Vagina (tissue), 2 donors: ENCODE measurements at regions of chr9 and their contacts with region 1.

Region 1: GRCh38 chr9:74804018-74804385 is 83.7 kb downstream of the TRPM6 start:
- DNase-seq: no peak
- H3K4me3 ChIP-seq: no peak overlapping the region
- H3K27ac ChIP-seq: no peak overlapping the region
- H3K4me1 ChIP-seq: no peaks in the 10 kb centered on the region
- H3K27me3 ChIP-seq: no peaks in the 10 kb centered on the region
- CTCF ChIP-seq: no peak
- POLR2A ChIP-seq: no peak

Region 2: GRCh38 chr9:74770508-74771261 is 33.3 kb before region 1 on chr9:
- intact Hi-C with region 1: no loop called
- DNase-seq: no peak
- H3K4me3 ChIP-seq: no peak overlapping the region
- H3K27ac ChIP-seq: no peak overlapping the region
- H3K4me1 ChIP-seq: no peaks in the 10 kb centered on the region
- H3K27me3 ChIP-seq: no peaks in the 10 kb centered on the region
- CTCF ChIP-seq: no peak
- POLR2A ChIP-seq: no peak

Region 3: DNA sequence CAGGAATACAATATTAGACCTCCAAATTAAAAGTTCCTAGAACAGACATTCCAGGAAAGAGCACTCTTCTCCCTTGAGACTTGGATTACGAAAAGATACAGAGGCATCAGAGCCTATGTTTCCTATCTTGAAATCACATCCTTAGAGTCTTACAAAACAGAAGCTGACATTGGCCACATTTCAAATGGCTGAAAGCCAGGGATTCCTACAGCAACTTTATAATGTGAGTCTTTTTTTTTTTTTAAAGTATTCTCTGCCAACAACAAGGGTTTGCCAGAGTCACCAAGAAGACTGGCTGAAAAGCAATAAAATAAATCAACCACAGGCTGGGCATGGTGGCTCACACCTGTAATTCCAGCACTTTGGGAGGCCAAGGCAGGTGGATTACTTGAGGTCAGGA is 20.7 kb after region 1 on chr9:
- intact Hi-C with region 1: loop called (anchors 1 kb)
- DNase-seq: no peak
- H3K4me3 ChIP-seq: no peak overlapping the region
- H3K27ac ChIP-seq: no peak overlapping the region
- H3K4me1 ChIP-seq: no peaks in the 10 kb centered on the region
- H3K27me3 ChIP-seq: no peaks in the 10 kb centered on the region
- CTCF ChIP-seq: no peak
- POLR2A ChIP-seq: no peak

Region 4: GRCh38 chr9:75666861-75667554 is 863.0 kb after region 1 on chr9:
- intact Hi-C with region 1: no loop called
- DNase-seq: no peak
- H3K4me3 ChIP-seq: no peak overlapping the region
- H3K27ac ChIP-seq: no peak overlapping the region
- H3K4me1 ChIP-seq: no peaks in the 10 kb centered on the region
- H3K27me3 ChIP-seq: no peaks in the 10 kb centered on the region
- CTCF ChIP-seq: no peak
- POLR2A ChIP-seq: no peak